ENCODE measurements at regions of chr7 and their contacts with region 1.

Region 1: DNA sequence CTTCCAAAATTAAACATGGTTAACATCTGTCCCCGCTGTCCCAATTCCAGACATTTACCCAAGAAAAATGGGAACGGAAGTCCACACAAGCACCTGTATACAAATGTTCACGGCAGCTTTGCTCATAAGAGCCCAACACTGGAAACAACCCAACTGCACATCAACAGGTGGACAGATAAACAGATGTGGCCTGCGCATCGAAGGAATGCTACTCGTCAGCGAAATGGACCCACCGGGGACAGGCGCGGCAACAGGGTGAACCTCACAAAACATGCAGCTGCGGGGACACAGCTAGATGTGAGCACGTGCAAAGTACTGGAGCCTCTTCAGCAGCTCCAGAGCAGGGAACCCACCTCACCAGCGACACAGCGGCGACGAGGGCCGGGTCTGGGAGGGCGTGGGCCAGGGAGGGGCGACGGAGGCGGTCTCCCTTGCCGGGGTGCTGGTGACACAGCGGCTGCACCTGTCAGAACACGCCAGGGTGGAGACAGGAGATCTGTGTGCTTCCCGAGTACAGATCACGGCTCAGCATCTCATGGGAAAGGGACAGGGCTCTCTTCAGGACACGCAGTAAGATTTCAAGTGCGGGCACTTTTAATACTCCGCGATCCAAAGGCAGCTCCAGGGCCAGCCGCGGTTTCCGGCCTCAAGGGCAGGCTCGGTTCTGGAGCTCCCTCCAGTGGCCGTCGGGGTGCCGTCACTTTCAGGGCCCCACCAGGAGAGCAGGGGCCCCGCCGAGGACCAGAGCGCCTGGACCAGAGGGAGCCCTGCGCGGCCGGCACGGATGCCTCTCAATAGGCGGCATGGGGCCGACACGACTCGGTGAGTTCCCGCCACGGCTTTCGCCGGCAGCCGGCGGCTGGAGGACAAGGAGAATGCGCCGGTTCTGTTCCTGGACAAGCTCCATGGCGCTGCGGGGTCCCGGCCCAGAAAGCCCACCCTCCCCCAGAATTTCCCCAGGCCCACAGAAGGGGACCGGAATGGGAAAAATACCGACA is 21.2 kb downstream of the GPR146 start:
- DNase-seq: peak; percentile 89
- H3K4me3 Mint-ChIP-seq: no peak overlapping the region
- H3K27ac Mint-ChIP-seq: no peak overlapping the region
- H3K4me1 Mint-ChIP-seq: peaks cover 5% of the 10 kb centered on the region
- H3K27me3 Mint-ChIP-seq: no peaks in the 10 kb centered on the region

Region 2: DNA sequence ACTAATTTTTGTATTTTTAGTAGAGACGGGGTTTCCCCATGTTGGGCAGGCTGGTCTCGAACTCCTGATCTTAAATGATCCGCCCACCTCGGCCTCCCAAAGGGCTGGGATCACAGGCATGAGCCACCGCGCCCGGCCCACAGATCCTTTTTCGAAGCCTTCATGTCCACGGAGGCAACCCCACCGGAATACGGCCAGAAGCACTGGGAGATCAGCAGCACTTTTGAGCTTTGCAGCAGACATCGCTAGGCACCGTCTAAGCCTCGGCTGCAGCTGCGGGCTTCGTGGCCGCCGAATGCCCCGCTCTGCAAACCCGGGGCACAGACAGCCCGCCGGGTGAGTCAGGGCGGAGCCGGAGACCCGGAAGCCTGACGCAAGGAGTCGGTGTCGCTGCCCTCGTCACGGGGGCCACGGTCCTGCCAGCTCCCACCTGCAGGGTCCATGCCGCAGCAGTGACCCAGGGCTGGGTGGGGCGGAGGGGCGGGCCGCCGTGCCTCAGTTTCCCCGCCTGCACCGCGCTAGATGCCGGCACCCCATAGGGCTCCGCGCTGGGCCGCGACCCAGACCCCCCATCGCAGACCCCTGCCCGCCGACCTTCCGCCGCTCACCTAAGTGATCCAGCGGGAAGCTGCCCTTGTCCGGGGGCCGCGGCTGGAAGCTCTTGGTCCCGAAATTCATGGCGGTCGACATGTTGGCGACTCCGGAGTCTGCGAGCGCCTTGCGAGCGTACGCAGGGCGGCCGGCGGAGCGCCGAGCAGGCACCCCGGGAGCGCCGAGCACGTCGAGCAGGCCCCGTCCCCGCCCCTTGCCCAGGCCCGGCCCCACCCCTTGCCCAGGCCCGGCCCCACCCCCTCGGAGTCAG is 90.5 kb before region 1 on chr7 and contains the start of gene COX19:
- CTCF ChIA-PET with region 1: interaction called, 17 read pairs
- POLR2A ChIA-PET with region 1: no interaction called
- intact Hi-C with region 1: no loop called
- DNase-seq: peak; percentile 94
- H3K4me3 Mint-ChIP-seq: peak within 1 kb of the TSS; percentile 95
- H3K27ac Mint-ChIP-seq: peak within 1 kb of the TSS; percentile 90
- H3K4me1 Mint-ChIP-seq: peaks cover 27% of the 10 kb centered on the region
- H3K27me3 Mint-ChIP-seq: no peaks in the 10 kb centered on the region
- total RNA-seq, gene COX19: 14.1 to 15.6 TPM

Region 3: DNA sequence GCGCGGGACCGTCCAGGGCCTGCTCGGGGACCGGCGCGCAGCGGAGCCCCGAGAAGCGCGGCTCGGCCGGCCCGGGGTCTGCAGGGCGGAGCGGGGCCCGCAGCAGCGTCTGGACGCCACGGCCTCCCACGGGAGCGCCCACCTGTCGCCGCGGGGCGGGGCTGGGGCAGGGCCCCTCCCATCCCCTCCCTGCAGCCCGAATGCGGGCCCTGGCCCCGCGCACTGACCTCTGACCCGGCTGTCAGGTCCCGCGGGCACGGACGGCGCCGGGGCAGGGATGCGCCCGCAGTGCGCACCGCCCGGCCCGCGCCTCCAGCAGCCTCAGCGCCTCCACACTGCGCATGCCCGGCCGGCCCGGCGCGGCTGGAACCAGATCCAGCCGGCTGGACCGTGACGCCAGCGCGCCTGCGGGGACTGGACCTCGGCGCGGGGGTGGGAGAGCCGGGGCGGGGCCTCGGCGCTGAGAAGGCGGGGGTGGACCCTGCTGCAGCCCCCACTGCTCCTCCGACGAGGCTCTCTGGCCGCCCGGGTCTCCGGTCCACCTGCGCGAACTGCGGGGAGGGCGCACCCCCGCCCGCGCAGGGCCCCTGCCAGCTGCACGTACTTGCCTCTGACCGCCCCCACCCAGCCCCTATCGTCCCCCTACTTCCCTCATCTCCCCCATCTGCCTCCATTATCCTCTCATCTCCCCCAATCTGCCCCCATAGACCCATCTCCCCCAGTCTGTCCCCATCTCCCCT is 37.4 kb before region 1 on chr7:
- CTCF ChIA-PET with region 1: interaction called, 12 read pairs
- POLR2A ChIA-PET with region 1: no interaction called
- intact Hi-C with region 1: no loop called
- DNase-seq: peak; percentile 92
- H3K4me3 Mint-ChIP-seq: peak overlapping the region; percentile 66
- H3K27ac Mint-ChIP-seq: peak overlapping the region; percentile 83
- H3K4me1 Mint-ChIP-seq: peaks cover 37% of the 10 kb centered on the region
- H3K27me3 Mint-ChIP-seq: no peaks in the 10 kb centered on the region

Region 4: DNA sequence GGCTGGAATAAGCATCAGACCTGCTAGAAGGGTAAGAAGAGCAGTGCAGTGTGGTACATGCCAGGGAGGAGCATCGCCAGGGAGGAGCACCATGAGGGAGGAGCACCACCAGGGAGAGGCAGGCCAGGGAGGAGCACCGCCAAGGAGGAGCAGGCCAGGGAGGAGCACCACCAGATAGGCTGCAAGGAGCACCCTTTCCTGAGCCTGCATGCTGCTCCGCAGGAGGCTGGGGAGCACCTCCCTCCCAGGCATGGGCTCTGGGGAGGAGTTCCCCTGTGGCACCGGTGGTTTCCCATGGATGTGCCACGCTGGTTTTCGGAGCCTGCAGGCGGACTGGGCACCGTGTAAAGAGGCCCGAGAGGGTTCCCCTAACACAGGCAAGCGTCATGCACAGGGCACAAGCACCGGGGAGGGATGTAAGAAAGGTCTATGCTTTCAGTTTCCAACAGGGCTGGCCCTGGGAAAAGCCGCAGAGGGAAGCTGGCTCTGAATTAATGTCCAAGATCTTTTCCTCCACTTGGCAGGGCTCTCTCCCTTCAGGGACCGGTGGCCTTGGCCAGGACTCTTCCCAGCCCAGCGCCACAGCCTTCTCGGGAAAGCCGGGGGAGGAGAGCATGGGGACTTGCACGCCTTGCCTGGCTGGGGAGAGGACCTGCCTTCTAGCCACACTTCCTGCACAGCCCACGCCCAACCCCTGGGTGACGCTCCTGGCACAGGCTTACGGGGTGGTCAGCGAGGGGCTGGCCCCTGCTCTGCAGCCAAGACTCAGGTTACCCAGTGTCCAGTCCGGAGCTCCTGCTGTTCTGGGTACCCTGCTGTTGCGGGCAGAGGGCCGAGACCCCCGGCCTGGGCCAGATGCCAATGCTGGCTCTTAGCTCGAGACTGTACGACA is 10.9 kb after region 1 on chr7:
- CTCF ChIA-PET with region 1: interaction called, 13 read pairs
- POLR2A ChIA-PET with region 1: no interaction called
- intact Hi-C with region 1: no loop called
- DNase-seq: no peak
- H3K4me3 Mint-ChIP-seq: no peak overlapping the region
- H3K27ac Mint-ChIP-seq: peak overlapping the region; percentile 54
- H3K4me1 Mint-ChIP-seq: no peaks in the 10 kb centered on the region
- H3K27me3 Mint-ChIP-seq: no peaks in the 10 kb centered on the region

Region 5: GRCh38 chr7:1112109-1112508 is 46.5 kb after region 1 on chr7:
- CTCF ChIA-PET with region 1: no interaction called
- POLR2A ChIA-PET with region 1: no interaction called
- intact Hi-C with region 1: no loop called
- DNase-seq: no peak
- H3K4me3 Mint-ChIP-seq: no peak overlapping the region
- H3K27ac Mint-ChIP-seq: no peak overlapping the region
- H3K4me1 Mint-ChIP-seq: no peaks in the 10 kb centered on the region
- H3K27me3 Mint-ChIP-seq: no peaks in the 10 kb centered on the region

Region 6: GRCh38 chr7:1175967-1176851 is 110.6 kb after region 1 on chr7:
- CTCF ChIA-PET with region 1: interaction called, 14 read pairs
- POLR2A ChIA-PET with region 1: no interaction called
- intact Hi-C with region 1: no loop called
- DNase-seq: peak; percentile 91
- H3K4me3 Mint-ChIP-seq: peak overlapping the region; percentile 52
- H3K27ac Mint-ChIP-seq: peak overlapping the region; percentile 42
- H3K4me1 Mint-ChIP-seq: peaks cover 11% of the 10 kb centered on the region
- H3K27me3 Mint-ChIP-seq: peaks cover 14% of the 10 kb centered on the region

Measured in activated CD4-positive, alpha-beta memory T cell treated with anti-CD3 and anti-CD28 coated beads for 36 hours (primary cell).